SK-N-SH (cell line): ENCODE measurements at regions of chr3 and their contacts with region 1.

Region 1: DNA sequence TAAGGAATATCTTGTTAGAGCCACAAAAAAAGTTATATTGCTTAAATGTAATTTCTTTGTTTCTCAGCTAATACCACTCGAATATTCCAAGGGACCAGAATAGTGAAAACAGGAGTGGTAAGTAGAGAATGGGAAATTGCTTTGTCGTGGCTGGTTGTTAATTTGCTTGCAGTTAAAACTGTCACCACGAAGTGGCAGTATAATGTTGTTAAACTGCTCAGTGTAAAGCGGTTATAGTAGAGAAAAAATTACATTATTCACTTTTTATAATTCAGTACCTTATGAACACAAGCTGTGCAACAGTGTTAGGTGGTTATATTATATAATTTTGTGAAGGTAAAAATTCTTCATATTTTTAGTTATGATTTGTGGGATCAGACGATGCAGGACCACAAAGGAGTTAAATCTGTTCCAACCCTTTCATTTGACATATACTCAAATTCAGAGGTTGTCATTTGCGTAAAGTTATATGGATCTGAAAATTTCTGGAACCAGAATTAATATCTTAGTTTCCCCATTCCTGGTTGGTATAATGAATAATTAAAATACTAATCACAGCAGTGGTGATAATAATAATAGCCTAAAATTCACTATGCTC is 171.8 kb downstream of the FEZF2 start:
- DNase-seq: peak; percentile 65
- H3K4me3 ChIP-seq: no peak overlapping the region; a peak in 1 of 4 replicates
- H3K27ac ChIP-seq: no peak overlapping the region
- H3K4me1 ChIP-seq: no peaks in the 10 kb centered on the region
- H3K27me3 ChIP-seq: no peaks in the 10 kb centered on the region
- CTCF ChIP-seq: peak; percentile 77
- EP300 ChIP-seq: no peak
- RAD21 ChIP-seq: peak; percentile 84

Region 2: GRCh38 chr3:62119151-62119550 is 82.4 kb before region 1 on chr3:
- CTCF ChIA-PET with region 1: no interaction called
- POLR2A ChIA-PET with region 1: no interaction called
- DNase-seq: no peak
- H3K4me3 ChIP-seq: no peak overlapping the region
- H3K27ac ChIP-seq: no peak overlapping the region
- H3K4me1 ChIP-seq: no peaks in the 10 kb centered on the region
- H3K27me3 ChIP-seq: no peaks in the 10 kb centered on the region
- CTCF ChIP-seq: no peak
- EP300 ChIP-seq: no peak
- RAD21 ChIP-seq: no peak

Region 3: DNA sequence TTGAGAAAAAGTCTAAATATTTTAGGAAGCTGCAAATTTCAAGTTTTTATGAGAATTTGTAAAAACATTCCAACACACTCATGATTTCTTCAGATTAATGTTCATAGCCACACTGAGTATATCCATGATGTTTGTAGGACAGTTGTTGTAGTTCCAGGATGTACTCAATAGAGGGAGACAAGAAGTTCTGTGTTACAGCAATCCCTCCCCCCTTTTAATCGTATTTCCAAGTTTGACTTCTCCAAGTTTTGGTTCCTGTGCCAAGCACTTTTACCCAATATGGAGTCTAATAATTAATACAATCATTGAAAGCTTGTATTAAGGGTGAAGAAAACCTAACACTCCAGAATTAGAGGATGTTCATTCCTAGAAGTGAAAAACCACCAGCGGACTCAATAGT is 28.4 kb after region 1 on chr3:
- CTCF ChIA-PET with region 1: interaction called, 20 read pairs
- POLR2A ChIA-PET with region 1: no interaction called
- DNase-seq: peak; percentile 40
- H3K4me3 ChIP-seq: no peak overlapping the region
- H3K27ac ChIP-seq: no peak overlapping the region
- H3K4me1 ChIP-seq: no peaks in the 10 kb centered on the region
- H3K27me3 ChIP-seq: no peaks in the 10 kb centered on the region
- CTCF ChIP-seq: peak; percentile 45
- EP300 ChIP-seq: no peak
- RAD21 ChIP-seq: peak; percentile 56

Region 4: DNA sequence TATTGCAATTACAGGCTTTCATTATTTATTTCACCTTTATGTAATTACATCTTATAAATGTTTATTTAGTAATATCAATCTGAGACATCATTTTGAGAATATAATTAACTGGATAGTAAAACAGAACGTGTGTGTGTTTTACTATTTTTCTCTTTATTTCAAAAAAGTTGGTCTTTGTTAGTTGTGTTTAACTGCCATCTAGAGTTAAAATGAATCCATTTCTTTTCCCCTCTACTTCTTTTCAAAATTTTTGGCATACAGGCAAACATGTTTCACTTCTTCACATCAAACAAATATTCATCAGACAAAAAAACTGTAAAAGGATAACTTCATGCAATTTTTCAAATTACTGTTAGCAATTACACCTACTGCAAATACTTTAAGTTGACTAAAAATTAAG is 110.7 kb after region 1 on chr3:
- CTCF ChIA-PET with region 1: interaction called, 38 read pairs
- POLR2A ChIA-PET with region 1: no interaction called
- DNase-seq: no peak
- H3K4me3 ChIP-seq: no peak overlapping the region
- H3K27ac ChIP-seq: no peak overlapping the region
- H3K4me1 ChIP-seq: no peaks in the 10 kb centered on the region
- H3K27me3 ChIP-seq: no peaks in the 10 kb centered on the region
- CTCF ChIP-seq: no peak; the same call in 1 of the 2 replicates
- EP300 ChIP-seq: no peak
- RAD21 ChIP-seq: peak; percentile 57

Region 5: DNA sequence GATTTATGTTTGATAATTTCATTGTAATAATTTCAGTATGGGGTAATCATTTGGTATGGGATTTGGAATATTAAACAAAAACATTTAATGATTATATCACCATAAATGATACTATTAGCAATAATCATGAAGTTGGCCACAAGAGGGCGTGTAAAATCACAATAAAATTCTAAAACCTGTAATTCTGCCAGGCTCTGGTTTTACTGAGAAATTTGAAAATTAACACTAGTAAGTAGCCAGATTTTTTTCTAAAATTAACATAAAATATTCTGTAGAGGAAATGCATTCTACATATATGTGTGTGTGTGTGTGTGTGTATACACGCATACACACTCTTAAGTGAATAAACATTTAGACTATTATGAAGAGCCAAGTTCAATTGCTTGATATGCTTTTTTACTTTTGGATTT is 131.3 kb after region 1 on chr3:
- CTCF ChIA-PET with region 1: interaction called, 20 read pairs
- POLR2A ChIA-PET with region 1: no interaction called
- DNase-seq: peak; percentile 9
- H3K4me3 ChIP-seq: no peak overlapping the region
- H3K27ac ChIP-seq: no peak overlapping the region
- H3K4me1 ChIP-seq: no peaks in the 10 kb centered on the region
- H3K27me3 ChIP-seq: no peaks in the 10 kb centered on the region
- CTCF ChIP-seq: peak; percentile 83
- EP300 ChIP-seq: no peak
- RAD21 ChIP-seq: peak; percentile 62

Region 6: GRCh38 chr3:62405135-62405534 is 203.6 kb after region 1 on chr3:
- CTCF ChIA-PET with region 1: no interaction called
- POLR2A ChIA-PET with region 1: no interaction called
- DNase-seq: no peak
- H3K4me3 ChIP-seq: no peak overlapping the region
- H3K27ac ChIP-seq: no peak overlapping the region
- H3K4me1 ChIP-seq: no peaks in the 10 kb centered on the region
- H3K27me3 ChIP-seq: no peaks in the 10 kb centered on the region
- CTCF ChIP-seq: no peak
- EP300 ChIP-seq: no peak
- RAD21 ChIP-seq: no peak

Region 7: DNA sequence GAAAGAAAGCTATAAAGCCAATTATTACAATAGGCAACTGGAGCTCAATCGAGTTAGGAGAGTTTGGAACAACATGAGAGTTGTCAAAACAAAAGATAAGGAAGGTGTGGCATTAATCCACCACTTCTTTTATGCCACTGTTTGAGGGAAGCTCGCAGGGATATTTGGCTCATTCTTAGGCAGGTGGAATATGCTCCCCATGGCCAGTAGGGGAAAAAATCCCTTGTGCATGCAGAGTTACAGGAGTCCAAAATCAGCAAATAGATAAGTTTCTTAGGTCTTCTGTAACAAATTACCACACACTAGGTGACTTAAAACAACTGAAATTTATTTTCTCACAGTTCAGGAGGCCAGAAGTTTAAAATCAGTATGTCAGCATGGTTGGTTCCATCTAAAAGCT is 941.1 kb after region 1 on chr3:
- CTCF ChIA-PET with region 1: no interaction called
- POLR2A ChIA-PET with region 1: no interaction called
- DNase-seq: no peak
- H3K4me3 ChIP-seq: no peak overlapping the region
- H3K27ac ChIP-seq: no peak overlapping the region
- H3K4me1 ChIP-seq: no peaks in the 10 kb centered on the region
- H3K27me3 ChIP-seq: no peaks in the 10 kb centered on the region
- CTCF ChIP-seq: peak; percentile 13; the same call in 1 of the 2 replicates
- EP300 ChIP-seq: no peak
- RAD21 ChIP-seq: no peak